ENCODE measurements at regions of chr6 and their contacts with region 1.

Region 1: DNA sequence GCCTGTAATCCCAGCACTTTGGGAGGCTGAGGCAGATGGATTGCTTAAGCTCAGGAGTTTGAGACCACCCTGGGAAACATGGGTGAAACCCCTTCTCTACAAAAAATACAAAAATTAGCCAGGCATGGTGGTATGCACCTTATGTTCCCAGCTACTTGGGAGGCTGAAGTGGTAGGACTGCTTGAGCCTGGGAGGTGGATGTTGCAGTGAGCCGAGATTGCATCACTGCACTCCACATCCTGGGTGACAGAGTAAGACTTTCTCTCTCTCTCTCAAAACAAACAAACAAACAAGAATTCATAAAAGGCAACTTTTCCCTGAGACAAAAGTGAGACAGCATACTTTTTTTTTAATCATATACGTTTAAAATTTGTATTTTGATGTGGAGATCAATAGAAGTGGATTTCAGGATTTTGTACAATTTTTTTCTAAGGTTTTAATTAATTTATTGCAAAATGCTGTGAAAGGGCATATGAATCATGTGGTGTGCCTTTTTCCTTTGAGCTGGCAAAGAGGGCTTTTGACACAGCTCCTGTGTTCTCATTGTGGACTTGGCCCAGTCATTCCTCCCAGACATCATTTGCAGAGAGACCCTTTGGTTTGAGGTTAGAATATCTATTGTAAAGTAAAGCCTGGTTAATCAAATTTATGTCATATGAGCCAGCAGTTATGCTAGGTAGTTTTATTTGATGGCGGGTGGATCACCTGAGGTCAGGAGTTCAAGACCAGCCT is 77.1 kb downstream of the TULP4 start:
- DNase-seq: no peak
- ATAC-seq: no peak
- H3K4me3 ChIP-seq: no peak overlapping the region
- H3K27ac ChIP-seq: no peak overlapping the region
- H3K4me1 ChIP-seq: no peaks in the 10 kb centered on the region
- CTCF ChIP-seq: no peak
- EP300 ChIP-seq: no peak
- POLR2A ChIP-seq: no peak
- RAD21 ChIP-seq: no peak

Region 2: GRCh38 chr6:158697811-158698210 is 308.5 kb after region 1 on chr6:
- CTCF ChIA-PET with region 1: no interaction called
- POLR2A ChIA-PET with region 1: interaction called, 10 read pairs
- DNase-seq: no peak
- ATAC-seq: no peak
- H3K4me3 ChIP-seq: no peak overlapping the region
- H3K27ac ChIP-seq: no peak overlapping the region
- H3K4me1 ChIP-seq: no peaks in the 10 kb centered on the region
- CTCF ChIP-seq: no peak
- EP300 ChIP-seq: no peak
- POLR2A ChIP-seq: no peak
- RAD21 ChIP-seq: no peak

Region 3: DNA sequence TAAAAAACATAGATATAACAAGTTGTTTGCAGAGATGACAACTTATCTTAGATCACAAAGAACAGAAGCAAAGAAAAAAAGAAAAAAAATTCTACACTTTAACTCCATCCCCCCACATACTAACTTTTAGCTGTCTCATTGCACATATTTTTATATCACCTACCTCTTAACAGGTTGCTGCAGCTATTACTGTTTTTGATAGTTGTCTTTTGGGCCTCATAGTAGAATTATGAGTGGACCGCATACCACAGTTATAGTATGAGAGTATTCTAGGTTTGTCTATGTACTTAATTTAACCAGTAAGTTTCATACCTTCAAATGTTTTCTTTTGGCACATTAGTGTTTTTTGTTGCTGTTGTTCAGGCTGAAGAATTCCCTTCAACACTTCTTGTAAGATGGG is 598.3 kb after region 1 on chr6:
- CTCF ChIA-PET with region 1: no interaction called
- POLR2A ChIA-PET with region 1: no interaction called
- DNase-seq: no peak
- ATAC-seq: no peak
- H3K4me3 ChIP-seq: no peak overlapping the region
- H3K27ac ChIP-seq: no peak overlapping the region
- H3K4me1 ChIP-seq: 0 out of 3 replicates have a peak, but pooled peaks cover 4% of the 10 kb centered on the region
- CTCF ChIP-seq: no peak
- EP300 ChIP-seq: no peak
- POLR2A ChIP-seq: no peak
- RAD21 ChIP-seq: no peak

Measured in A549 (cell line).